Left cardiac atrium (tissue), 4 donors: ENCODE measurements at regions of chr2 and their contacts with region 1.

Region 1: GRCh38 chr2:66429071-66429477 is 5.9 kb upstream of the MEIS1 start:
- DNase-seq: no peak
- ATAC-seq: no peak

Region 2: DNA sequence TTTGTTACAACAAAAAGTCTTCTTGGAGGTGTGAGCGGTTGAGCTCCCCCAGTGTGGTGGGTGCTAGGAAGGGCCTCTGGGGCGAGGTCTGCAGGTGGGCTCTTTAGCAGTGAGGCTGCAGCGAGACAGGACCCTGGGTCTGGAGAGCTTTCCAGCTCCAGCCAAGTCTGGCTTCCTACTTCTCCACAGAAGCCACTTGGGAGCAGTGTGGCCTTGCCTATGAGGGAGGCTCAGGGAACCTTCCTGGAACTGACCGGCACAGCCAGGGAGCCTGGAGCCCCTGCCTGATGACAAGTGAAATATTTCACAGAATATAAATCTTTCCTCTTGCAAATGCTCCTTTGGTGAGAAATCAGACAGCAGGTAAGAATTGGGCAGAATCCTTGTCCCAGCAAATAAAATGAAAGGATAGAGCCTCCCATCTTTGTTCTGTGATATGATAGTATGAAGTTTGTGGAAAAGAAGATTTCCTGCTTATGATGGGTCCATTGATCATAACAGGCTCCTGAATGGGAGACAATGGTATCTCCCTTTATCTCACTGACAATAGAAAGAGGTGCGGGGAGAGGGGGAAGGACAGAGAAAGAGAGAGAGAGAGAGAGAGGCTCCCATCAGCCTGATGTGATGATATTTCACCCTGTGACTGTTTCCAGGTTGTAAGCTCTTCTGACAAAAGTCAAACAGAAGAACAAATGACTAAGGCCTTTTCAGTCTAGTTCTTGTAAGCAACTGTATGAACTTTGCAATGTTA is 706.9 kb before region 1 on chr2:
- intact Hi-C with region 1: loop called in 1 of 2 experiments (anchors 5 kb)
- DNase-seq: peak; percentile 50
- ATAC-seq: peak; percentile 86 to 87

Region 3: GRCh38 chr2:66171530-66171929 is 257.5 kb before region 1 on chr2:
- intact Hi-C with region 1: no loop called
- DNase-seq: no peak
- ATAC-seq: no peak

Region 4: DNA sequence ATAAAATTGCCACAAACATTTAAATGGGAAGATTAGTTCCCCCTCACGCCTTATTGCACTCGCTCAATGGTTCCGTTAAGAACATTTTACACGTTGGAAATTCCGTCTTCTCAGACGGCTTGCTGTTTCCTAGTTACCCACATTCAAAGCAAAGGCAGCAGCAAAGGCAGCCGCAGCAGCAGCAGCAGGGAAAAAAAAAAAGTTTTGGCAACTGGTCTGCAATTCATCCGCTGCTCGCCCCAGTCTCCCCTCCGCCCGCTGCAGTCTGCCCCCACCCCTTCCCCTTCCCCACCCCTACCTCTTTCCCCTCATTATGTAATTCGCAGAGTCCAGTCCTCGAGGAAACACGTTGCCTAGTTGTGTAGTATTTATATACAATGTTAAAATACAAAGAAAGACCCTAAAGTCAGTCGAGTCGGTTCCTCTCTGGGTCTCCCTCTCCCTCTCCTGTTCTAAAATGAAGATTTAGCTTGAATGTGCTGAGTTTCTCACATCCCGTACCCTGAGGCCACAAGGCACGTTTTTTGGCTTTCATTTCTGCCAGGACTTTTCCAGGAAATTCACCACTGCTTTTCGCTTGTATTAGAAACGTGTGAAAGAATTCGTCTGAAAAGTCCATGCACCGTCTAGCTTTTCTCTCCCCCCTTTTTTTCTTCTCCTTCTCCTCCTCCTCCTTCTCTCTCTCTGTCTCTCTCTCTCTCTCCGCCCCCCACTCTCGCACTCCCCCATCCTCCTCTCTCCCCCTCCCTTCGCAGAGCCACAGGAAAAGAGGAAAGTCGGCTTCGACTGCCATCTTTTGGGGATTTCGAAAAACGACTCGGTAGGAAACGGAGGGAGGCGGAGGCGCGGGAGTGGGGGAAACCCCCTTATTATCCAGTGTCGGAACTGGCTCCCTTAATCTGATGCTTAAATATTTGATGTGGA is 145.9 kb after region 1 on chr2:
- intact Hi-C with region 1: loop called (anchors 1 to 5 kb)
- DNase-seq: peak; percentile 57
- ATAC-seq: peak; percentile 78